B cell (primary cell): ENCODE measurements at regions of chr20 and their contacts with region 1.

Region 1: DNA sequence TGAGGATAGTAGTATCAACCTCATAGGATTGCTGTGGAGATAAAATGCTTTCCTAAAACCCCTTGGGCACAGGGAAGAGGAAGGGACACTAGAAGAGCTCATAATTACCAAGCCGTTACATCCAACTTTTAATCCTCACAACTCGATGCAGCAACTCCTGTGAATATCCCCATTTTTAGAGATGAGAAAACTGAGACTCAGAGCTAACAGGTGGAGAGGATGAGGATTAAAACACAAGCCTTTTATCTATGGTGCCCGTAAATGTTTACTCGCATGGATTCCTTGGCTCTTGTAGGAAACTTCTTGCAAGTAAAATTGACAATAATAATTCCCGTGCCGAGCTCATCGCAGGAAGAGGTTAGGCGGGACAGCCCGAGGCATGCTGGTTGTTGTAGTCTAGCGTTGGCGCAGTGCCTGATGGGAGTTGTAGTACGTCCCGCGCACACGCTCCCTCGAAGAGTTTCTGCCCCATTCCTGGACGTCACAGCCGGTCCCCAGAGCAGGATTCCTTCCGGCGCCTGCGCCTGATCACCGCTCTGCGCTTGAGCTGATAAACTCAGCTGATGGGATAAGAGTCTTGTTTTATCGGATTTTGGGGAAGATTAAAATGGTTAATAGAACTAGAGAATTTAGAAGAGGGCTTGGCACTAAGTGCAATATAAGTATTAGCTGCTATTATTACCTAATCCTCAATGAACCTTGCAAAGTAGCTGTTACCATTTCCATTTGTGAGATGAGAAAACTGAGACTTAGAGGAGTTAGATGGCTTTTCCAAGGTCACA is 2.8 kb upstream of the UBE2V1 start:
- DNase-seq: peak; percentile 87
- ATAC-seq: peak; percentile 77
- H3K4me3 ChIP-seq: peak overlapping the region; percentile 54 to 78 (median 64)
- H3K4me3 Mint-ChIP-seq: peak overlapping the region; percentile 85
- H3K27ac ChIP-seq: peak overlapping the region; percentile 38 to 53
- H3K27ac Mint-ChIP-seq: peak overlapping the region; percentile 86
- H3K4me1 ChIP-seq: peaks cover 39 to 40% of the 10 kb centered on the region in 2 donors
- H3K4me1 Mint-ChIP-seq: peaks cover 56% of the 10 kb centered on the region
- H3K27me3 ChIP-seq: no peaks in the 10 kb centered on the region
- H3K27me3 Mint-ChIP-seq: no peaks in the 10 kb centered on the region
- CTCF ChIP-seq: no peak

Region 2: DNA sequence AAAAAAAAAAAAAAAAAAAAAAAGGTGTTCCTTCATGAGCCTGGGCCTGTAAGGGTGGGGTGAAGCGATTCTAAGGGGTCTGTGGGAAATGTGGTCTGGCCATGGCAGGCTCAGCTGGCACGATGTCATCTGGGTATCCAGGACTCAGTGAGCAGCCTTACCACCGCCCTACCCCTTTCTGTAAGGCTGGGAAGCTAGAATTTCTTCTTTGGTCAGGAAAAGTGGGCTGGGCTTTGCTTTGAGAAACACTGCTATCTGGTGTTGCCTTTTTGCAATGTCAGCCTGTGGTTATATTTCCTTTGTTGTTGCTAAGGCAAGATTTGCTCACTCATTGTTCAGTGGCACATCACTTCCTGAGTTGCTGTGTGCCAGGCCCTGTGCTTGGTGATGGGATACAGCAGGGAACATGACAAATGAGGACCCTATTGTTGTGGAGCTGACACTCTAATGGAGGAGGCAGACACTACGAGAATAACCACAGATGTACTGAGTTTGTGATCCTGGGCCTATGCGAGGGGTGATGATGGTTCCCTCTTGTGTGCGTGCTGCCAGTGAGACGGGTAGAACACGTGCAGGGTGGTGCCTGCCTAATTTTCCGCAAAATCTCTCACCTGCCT is 792.1 kb before region 1 on chr20:
- CTCF ChIA-PET with region 1: no interaction called
- POLR2A ChIA-PET with region 1: no interaction called
- intact Hi-C with region 1: no loop called
- DNase-seq: peak; percentile 25
- ATAC-seq: no peak
- H3K4me3 ChIP-seq: no peak overlapping the region
- H3K4me3 Mint-ChIP-seq: no peak overlapping the region
- H3K27ac ChIP-seq: no peak overlapping the region
- H3K27ac Mint-ChIP-seq: no peak overlapping the region
- H3K4me1 ChIP-seq: peaks cover 7 to 9% of the 10 kb centered on the region in 2 donors
- H3K4me1 Mint-ChIP-seq: peaks cover 11% of the 10 kb centered on the region
- H3K27me3 ChIP-seq: peaks cover 0 to 33% (median 15%) of the 10 kb centered on the region in 4 experiments
- H3K27me3 Mint-ChIP-seq: peaks cover 36% of the 10 kb centered on the region
- CTCF ChIP-seq: no peak

Region 3: GRCh38 chr20:49915378-49916145 is 200.2 kb before region 1 on chr20 and contains the start of gene SPATA2:
- CTCF ChIA-PET with region 1: no interaction called
- POLR2A ChIA-PET with region 1: no interaction called
- intact Hi-C with region 1: loop called (anchors 2 kb)
- DNase-seq: peak; percentile 99
- ATAC-seq: peak; percentile 81
- H3K4me3 ChIP-seq: peak within 1 kb of the TSS; percentile 79 to 96 (median 93)
- H3K4me3 Mint-ChIP-seq: peak within 1 kb of the TSS; percentile 99
- H3K27ac ChIP-seq: peak within 1 kb of the TSS; percentile 97 to 99
- H3K27ac Mint-ChIP-seq: peak within 1 kb of the TSS; percentile 100
- H3K4me1 ChIP-seq: peaks cover 12 to 26% of the 10 kb centered on the region in 2 donors
- H3K4me1 Mint-ChIP-seq: peaks cover 31% of the 10 kb centered on the region
- H3K27me3 ChIP-seq: no peaks in the 10 kb centered on the region
- H3K27me3 Mint-ChIP-seq: no peaks in the 10 kb centered on the region
- CTCF ChIP-seq: no peak
- total RNA-seq, gene SPATA2: 10.6 and 10.7 TPM in 2 replicates

Region 4: GRCh38 chr20:50085452-50086365 is 30.1 kb before region 1 on chr20:
- CTCF ChIA-PET with region 1: interaction called, 15 read pairs
- POLR2A ChIA-PET with region 1: no interaction called
- intact Hi-C with region 1: no loop called
- DNase-seq: peak; percentile 71
- ATAC-seq: peak; percentile 86
- H3K4me3 ChIP-seq: peak overlapping the region; percentile 30 to 78 (median 61)
- H3K4me3 Mint-ChIP-seq: peak overlapping the region; percentile 88
- H3K27ac ChIP-seq: peak overlapping the region in 1 of 2 donors; percentile 65
- H3K27ac Mint-ChIP-seq: peak overlapping the region; percentile 64
- H3K4me1 ChIP-seq: peaks cover 12 to 13% of the 10 kb centered on the region in 2 donors
- H3K4me1 Mint-ChIP-seq: peaks cover 13% of the 10 kb centered on the region
- H3K27me3 ChIP-seq: no peaks in the 10 kb centered on the region
- H3K27me3 Mint-ChIP-seq: no peaks in the 10 kb centered on the region
- CTCF ChIP-seq: peak; percentile 87

Region 5: GRCh38 chr20:50165684-50166554 is 50.1 kb after region 1 on chr20:
- CTCF ChIA-PET with region 1: interaction called, 297 read pairs
- POLR2A ChIA-PET with region 1: no interaction called
- intact Hi-C with region 1: loop called (anchors 2 kb)
- DNase-seq: peak; percentile 74
- ATAC-seq: peak; percentile 97
- H3K4me3 ChIP-seq: peak overlapping the region in 4 of 5 experiments; percentile 24 to 56 (median 47)
- H3K4me3 Mint-ChIP-seq: peak overlapping the region; percentile 84
- H3K27ac ChIP-seq: no peak overlapping the region
- H3K27ac Mint-ChIP-seq: peak overlapping the region; percentile 70
- H3K4me1 ChIP-seq: peaks cover 9 to 10% of the 10 kb centered on the region in 2 donors
- H3K4me1 Mint-ChIP-seq: peaks cover 10% of the 10 kb centered on the region
- H3K27me3 ChIP-seq: peaks cover 0 to 6% (median 2%) of the 10 kb centered on the region in 4 experiments
- H3K27me3 Mint-ChIP-seq: peaks cover 12% of the 10 kb centered on the region
- CTCF ChIP-seq: no peak

Region 6: DNA sequence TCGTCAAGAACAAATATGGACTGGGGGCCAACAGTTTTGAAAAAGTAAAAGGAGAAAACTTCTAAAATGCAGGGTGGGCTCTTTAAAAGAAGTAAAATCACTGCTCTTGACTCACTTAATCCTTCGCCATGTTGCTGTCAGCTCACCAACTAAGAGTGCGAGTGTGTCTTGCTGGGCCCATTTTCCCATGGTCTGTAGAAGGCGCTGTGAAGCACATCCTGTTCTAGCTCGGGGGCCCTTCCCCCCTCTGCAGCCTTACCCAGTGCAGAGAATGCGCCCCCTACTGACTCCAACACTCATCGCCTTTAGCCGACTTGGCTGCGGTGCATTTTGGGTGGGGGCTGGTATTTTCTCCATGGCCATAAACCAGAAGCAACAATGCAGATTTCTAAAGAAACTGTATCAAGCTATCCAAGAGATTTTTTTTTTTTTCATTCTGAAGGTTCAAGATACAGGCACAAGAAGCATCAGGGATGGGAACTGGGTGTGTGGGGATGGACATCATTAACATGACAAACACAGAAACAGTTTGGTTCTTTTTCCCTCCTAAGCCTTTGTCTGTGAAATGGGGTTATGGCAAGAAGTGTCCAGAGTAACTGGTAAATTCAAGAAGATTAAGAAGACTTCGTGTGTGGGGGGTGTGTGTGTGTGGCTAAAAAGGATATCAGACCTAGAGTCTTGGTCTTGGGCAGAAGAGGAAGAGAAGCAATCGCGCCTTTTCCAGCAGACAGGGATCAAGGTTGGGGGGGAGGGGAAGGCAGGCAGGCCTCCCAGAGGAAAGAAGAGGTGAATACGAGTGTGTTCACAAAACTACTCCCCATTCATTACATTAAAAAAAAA is 813.7 kb after region 1 on chr20:
- CTCF ChIA-PET with region 1: no interaction called
- POLR2A ChIA-PET with region 1: interaction called, 4 read pairs
- intact Hi-C with region 1: loop called (anchors 5 kb)
- DNase-seq: peak; percentile 95
- ATAC-seq: peak; percentile 55
- H3K4me3 ChIP-seq: peak overlapping the region; percentile 62 to 85 (median 76)
- H3K4me3 Mint-ChIP-seq: peak overlapping the region; percentile 92
- H3K27ac ChIP-seq: peak overlapping the region; percentile 62 to 68
- H3K27ac Mint-ChIP-seq: peak overlapping the region; percentile 91
- H3K4me1 ChIP-seq: peaks cover 24 to 28% of the 10 kb centered on the region in 2 donors
- H3K4me1 Mint-ChIP-seq: peaks cover 53% of the 10 kb centered on the region
- H3K27me3 ChIP-seq: no peaks in the 10 kb centered on the region
- H3K27me3 Mint-ChIP-seq: no peaks in the 10 kb centered on the region
- CTCF ChIP-seq: peak; percentile 95